ENCODE measurements at regions of chr5 and their contacts with region 1.

Region 1: DNA sequence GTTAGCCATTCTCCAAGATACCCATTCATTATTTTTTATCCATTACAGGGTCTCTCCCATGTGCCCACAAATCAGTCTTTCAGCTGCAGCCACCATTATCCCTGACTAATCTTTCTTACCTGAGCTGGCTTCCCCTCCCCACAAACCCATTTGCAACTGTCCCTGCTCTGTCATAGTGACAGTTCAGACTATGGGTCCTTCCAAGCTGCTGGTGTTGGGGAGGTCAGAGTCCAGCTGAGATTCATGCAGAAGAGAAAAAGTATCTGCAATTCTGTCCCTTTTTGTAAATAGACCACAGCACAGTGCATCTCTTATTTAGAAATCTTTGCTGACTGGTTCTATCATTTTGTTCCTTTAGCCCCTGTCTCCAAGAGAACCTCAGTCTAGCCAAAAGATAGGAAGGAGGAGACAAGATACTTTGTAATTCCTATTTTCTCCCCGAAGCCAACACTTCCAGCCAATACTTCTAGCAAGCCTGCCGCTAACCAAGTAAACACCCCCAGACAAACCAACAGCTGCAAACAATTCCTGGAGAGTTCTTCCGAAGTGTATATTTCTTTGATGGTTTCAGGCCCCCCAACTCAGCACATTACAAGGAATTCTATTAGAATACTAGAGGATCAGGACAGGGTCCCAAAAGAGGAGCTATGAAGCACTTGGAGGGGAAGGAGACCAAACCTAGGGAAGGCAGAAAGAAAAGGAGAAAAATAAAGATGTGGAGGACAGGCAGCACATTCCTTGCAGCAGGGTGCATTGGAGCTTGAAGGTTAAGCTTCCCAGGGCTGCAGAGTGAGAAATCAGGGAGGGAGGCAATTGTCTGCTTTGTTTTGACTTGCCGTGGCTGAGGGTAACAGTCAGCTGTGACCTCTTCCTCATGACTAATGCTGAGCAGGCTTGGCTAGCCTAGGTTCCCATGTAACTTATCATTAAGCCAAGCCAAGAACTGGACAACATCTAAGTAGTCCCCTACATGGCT is 148.5 kb downstream of the SGCD start:
- DNase-seq: peak; percentile 84
- H3K4me3 ChIP-seq: no peak overlapping the region
- H3K27ac ChIP-seq: peak overlapping the region; percentile 34 to 71 (median 56)
- H3K4me1 ChIP-seq: peaks cover 0 to 44% (median 31%) of the 10 kb centered on the region in 4 donors
- H3K27me3 ChIP-seq: no peaks in the 10 kb centered on the region
- CTCF ChIP-seq: no peak
- EP300 ChIP-seq: no peak
- POLR2A ChIP-seq: no peak

Region 2: GRCh38 chr5:156326718-156327259 is 148.7 kb before region 1 on chr5 and contains the start of gene SGCD:
- intact Hi-C with region 1: no loop called
- DNase-seq: peak; percentile 86
- H3K4me3 ChIP-seq: peak within 1 kb of the TSS; percentile 34 to 60 (median 54)
- H3K27ac ChIP-seq: peak within 1 kb of the TSS; percentile 79 to 87 (median 83)
- H3K4me1 ChIP-seq: peaks cover 0 to 39% (median 18%) of the 10 kb centered on the region in 4 donors
- H3K27me3 ChIP-seq: no peaks in the 10 kb centered on the region
- CTCF ChIP-seq: no peak
- EP300 ChIP-seq: no peak
- POLR2A ChIP-seq: peak in 1 of 2 donors; percentile 62
- total RNA-seq, gene SGCD: 8.2 to 34.3 (median 19.8) TPM

Region 3: GRCh38 chr5:156411185-156411613 is 64.3 kb before region 1 on chr5:
- intact Hi-C with region 1: loop called (anchors 2 kb)
- DNase-seq: no peak
- H3K4me3 ChIP-seq: peak overlapping the region in 2 of 4 donors; percentile 4 to 29
- H3K27ac ChIP-seq: peak overlapping the region; percentile 67 to 78 (median 70)
- H3K4me1 ChIP-seq: peaks cover 3 to 49% (median 32%) of the 10 kb centered on the region in 4 donors
- H3K27me3 ChIP-seq: no peaks in the 10 kb centered on the region
- CTCF ChIP-seq: no peak
- EP300 ChIP-seq: no peak
- POLR2A ChIP-seq: no peak

Region 4: GRCh38 chr5:156423597-156423996 is 51.9 kb before region 1 on chr5:
- intact Hi-C with region 1: no loop called
- DNase-seq: no peak
- H3K4me3 ChIP-seq: no peak overlapping the region
- H3K27ac ChIP-seq: no peak overlapping the region
- H3K4me1 ChIP-seq: no peaks in the 10 kb centered on the region
- H3K27me3 ChIP-seq: no peaks in the 10 kb centered on the region
- CTCF ChIP-seq: no peak
- EP300 ChIP-seq: no peak
- POLR2A ChIP-seq: no peak

Region 5: GRCh38 chr5:156438076-156438475 is 37.4 kb before region 1 on chr5:
- intact Hi-C with region 1: no loop called
- DNase-seq: no peak
- H3K4me3 ChIP-seq: no peak overlapping the region
- H3K27ac ChIP-seq: no peak overlapping the region
- H3K4me1 ChIP-seq: no peaks in the 10 kb centered on the region
- H3K27me3 ChIP-seq: no peaks in the 10 kb centered on the region
- CTCF ChIP-seq: no peak
- EP300 ChIP-seq: no peak
- POLR2A ChIP-seq: no peak

Measured in sigmoid colon (tissue), 7 donors.